ENCODE measurements at regions of chr10 and their contacts with region 1.

Region 1: DNA sequence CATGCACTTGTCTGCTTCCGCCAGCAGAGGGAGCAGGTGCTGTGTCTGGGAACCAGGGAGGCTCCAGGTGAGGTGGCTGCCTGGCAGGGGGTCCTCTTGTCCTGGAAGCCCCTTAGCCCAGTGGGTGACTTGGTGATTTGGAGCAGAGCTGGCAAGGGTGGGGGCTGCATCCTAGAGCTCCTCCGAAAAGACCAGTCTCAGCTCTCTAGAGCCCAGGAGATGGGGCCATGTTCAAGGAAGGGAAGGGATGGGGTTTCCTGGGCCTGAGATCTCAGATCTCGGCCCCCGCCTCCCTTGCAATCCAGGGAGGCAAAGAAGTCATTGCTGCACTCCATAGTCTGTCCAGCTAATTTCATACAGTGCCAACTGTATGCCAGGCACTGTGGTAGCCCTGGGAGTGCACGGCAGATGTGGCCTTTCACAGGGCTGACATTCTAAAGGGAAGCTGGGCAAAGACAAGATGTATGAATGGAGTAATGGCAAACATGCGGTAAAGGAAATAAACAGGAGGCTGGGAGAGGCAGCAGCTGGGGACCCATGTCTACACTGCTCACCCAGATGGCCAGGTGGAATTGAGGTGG is 20.4 kb upstream of the SFRP5 start:
- DNase-seq: peak; percentile 42 to 79 (median 60)
- ATAC-seq: peak; percentile 82
- H3K4me3 ChIP-seq: no peak overlapping the region
- H3K4me3 Mint-ChIP-seq: peak overlapping the region in 2 of 10 donors; percentile 5 to 25
- H3K27ac ChIP-seq: no peak overlapping the region
- H3K27ac Mint-ChIP-seq: peak overlapping the region in 5 of 9 donors; percentile 14 to 69 (median 32)
- H3K4me1 ChIP-seq: peaks cover 23 to 39% of the 10 kb centered on the region in 2 donors
- H3K4me1 Mint-ChIP-seq: peaks cover 23 to 52% (median 35%) of the 10 kb centered on the region in 7 donors
- H3K27me3 ChIP-seq: no peaks in the 10 kb centered on the region
- H3K27me3 Mint-ChIP-seq: peaks cover 0 to 16% (median 0%) of the 10 kb centered on the region in 5 donors

Region 2: GRCh38 chr10:97759158-97759887 is 32.9 kb before region 1 on chr10:
- CTCF ChIA-PET with region 1: interaction called, 7 read pairs
- POLR2A ChIA-PET with region 1: no interaction called
- intact Hi-C with region 1: loop called in 1 of 2 experiments (anchors 1 kb)
- DNase-seq: peak in 7 of 9 donors; percentile 23 to 57 (median 38)
- ATAC-seq: peak; percentile 74
- H3K4me3 ChIP-seq: no peak overlapping the region
- H3K4me3 Mint-ChIP-seq: no peak overlapping the region
- H3K27ac ChIP-seq: no peak overlapping the region
- H3K27ac Mint-ChIP-seq: peak overlapping the region in 2 of 9 donors; percentile 21 to 30
- H3K4me1 ChIP-seq: no peaks in the 10 kb centered on the region
- H3K4me1 Mint-ChIP-seq: peaks cover 0 to 4% (median 0%) of the 10 kb centered on the region in 7 donors
- H3K27me3 ChIP-seq: no peaks in the 10 kb centered on the region
- H3K27me3 Mint-ChIP-seq: no peaks in the 10 kb centered on the region

Region 3: DNA sequence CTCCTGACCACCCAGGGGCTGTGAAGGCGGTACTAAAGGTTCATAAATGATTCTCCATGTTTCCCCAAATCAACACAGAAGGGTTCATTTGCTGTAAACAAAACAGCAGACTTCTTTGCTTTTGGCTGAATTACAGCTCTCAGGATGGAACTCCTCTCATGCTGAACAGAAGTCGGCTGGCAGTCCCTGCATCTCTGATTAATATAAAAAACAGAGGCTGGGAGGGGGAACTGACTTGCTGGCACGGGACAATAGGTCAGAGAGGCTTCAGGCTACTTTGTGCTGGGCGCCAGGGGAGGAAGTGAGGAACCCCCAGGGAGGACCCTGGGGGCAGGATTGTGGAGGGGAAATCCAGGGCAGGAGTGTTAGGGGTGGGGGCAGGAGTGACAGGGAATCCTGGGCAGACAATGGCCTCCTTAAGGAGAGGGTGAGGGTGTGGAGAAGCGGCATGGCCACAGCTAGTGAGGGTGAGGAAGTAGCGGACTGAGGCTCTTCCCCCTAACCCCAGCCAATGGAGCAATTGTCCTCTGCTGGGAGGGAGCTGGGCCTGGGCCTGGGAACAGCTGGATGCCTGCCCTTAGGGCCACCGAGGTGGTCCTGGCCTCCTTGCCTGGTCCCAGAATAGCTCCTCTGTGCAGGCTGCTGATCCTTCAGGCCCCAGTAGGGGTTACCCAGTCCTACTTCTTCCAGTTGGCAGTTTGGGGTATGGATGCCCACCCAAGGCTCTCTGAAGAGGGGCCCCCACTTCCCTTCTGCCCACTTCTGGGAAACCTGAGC is 11.2 kb before region 1 on chr10:
- CTCF ChIA-PET with region 1: interaction called, 13 read pairs
- POLR2A ChIA-PET with region 1: interaction called, 10 read pairs
- intact Hi-C with region 1: no loop called
- DNase-seq: no peak
- ATAC-seq: peak; percentile 4
- H3K4me3 ChIP-seq: peak overlapping the region; percentile 37
- H3K4me3 Mint-ChIP-seq: peak overlapping the region in 9 of 10 donors; percentile 25 to 84 (median 74)
- H3K27ac ChIP-seq: peak overlapping the region; percentile 63
- H3K27ac Mint-ChIP-seq: peak overlapping the region in 8 of 9 donors; percentile 79 to 99 (median 90)
- H3K4me1 ChIP-seq: peaks cover 9 to 32% of the 10 kb centered on the region in 2 donors
- H3K4me1 Mint-ChIP-seq: peaks cover 8 to 39% (median 38%) of the 10 kb centered on the region in 7 donors
- H3K27me3 ChIP-seq: no peaks in the 10 kb centered on the region
- H3K27me3 Mint-ChIP-seq: no peaks in the 10 kb centered on the region

Region 4: DNA sequence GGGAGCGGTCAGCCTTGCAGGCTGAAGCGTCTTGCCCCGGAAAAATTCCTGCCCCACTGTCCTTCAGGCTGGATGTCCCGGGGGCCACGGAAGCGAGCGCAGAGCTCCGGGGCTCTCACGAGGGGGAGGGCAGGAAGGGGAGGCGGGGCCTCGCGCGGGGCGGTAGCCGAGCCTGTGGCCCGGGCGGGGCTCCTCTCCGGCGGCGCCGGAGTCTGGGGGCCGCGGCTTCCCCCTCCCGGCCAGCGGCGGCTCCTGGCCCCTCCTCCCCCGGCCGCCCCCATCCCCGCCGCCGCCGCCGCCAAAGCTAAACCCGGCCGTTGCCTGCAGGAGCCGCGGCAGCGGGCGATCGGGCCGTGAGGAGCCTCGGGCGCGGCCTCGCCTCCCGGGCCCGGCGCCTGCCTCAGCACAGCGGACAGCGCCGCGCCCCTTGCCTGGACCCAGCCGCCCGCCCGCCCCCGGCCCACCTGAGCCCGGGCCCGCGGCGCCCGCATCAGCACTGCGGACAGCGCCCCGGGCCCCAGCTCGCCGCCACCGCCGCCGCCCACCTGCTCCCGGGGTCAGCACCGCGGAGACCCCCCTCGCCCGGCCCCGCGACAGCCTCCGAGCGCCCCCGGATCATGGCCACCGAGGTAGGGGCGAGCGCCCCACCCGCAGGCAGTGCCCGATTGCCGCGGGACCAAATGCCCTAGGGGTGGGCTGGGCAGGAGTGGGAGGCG is 57.6 kb after region 1 on chr10 and contains the start of gene GOLGA7B:
- CTCF ChIA-PET with region 1: interaction called, 6 read pairs
- POLR2A ChIA-PET with region 1: interaction called, 5 read pairs
- intact Hi-C with region 1: loop called (anchors 1 to 2 kb)
- DNase-seq: peak; percentile 43 to 70 (median 66)
- ATAC-seq: peak; percentile 87
- H3K4me3 ChIP-seq: peak within 1 kb of the TSS; percentile 74
- H3K4me3 Mint-ChIP-seq: peak within 1 kb of the TSS; percentile 84 to 94 (median 90)
- H3K27ac ChIP-seq: peak within 1 kb of the TSS; percentile 61
- H3K27ac Mint-ChIP-seq: peak within 1 kb of the TSS; percentile 70 to 93 (median 87)
- H3K4me1 ChIP-seq: peaks cover 25 to 32% of the 10 kb centered on the region in 2 donors
- H3K4me1 Mint-ChIP-seq: peaks cover 21 to 49% (median 37%) of the 10 kb centered on the region in 7 donors
- H3K27me3 ChIP-seq: no peaks in the 10 kb centered on the region
- H3K27me3 Mint-ChIP-seq: peaks cover 0 to 4% (median 0%) of the 10 kb centered on the region in 5 donors
- total RNA-seq, gene GOLGA7B: 5.8 to 8.5 (median 6.5) TPM